AG04450 (cell line): ENCODE measurements at regions of chr12 and their contacts with region 1.

Region 1: GRCh38 chr12:51217968-51218606 is at the start of gene POU6F1:
- DNase-seq: peak; percentile 23
- H3K4me3 ChIP-seq: peak within 1 kb of the TSS; percentile 76
- H3K27ac ChIP-seq: peak within 1 kb of the TSS; percentile 75
- H3K27me3 ChIP-seq: no peaks in the 10 kb centered on the region
- CTCF ChIP-seq: peak; percentile 62
- polyA plus RNA-seq, gene POU6F1: 3.1 and 4.2 TPM in 2 replicates

Region 2: DNA sequence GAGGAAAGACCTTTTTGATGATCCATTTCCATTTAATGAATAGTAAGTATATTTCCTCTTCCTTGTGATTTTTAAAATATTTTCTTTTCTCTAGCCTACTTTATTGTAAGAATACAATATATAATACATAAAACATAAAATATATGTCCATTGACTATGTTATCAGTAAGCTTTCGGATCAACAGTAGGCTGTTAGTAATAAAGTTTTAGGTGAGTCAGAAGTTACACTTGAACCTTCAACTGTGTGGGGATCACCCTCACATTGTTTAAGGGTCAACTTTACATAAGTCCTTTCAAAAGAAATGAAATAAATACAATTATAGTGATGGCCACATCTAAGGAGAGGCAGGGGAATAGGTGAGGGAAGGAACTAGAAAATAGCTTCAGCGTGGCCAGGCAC is 40.2 kb before region 1 on chr12:
- CTCF ChIA-PET with region 1: interaction called, 10 read pairs
- POLR2A ChIA-PET with region 1: no interaction called
- DNase-seq: no peak
- H3K4me3 ChIP-seq: no peak overlapping the region
- H3K27ac ChIP-seq: no peak overlapping the region
- H3K27me3 ChIP-seq: no peaks in the 10 kb centered on the region
- CTCF ChIP-seq: no peak

Region 3: GRCh38 chr12:51229116-51229809 is 11.2 kb after region 1 on chr12:
- CTCF ChIA-PET with region 1: interaction called, 10 read pairs
- POLR2A ChIA-PET with region 1: no interaction called
- DNase-seq: no peak
- H3K4me3 ChIP-seq: no peak overlapping the region
- H3K27ac ChIP-seq: no peak overlapping the region
- H3K27me3 ChIP-seq: no peaks in the 10 kb centered on the region
- CTCF ChIP-seq: no peak

Region 4: DNA sequence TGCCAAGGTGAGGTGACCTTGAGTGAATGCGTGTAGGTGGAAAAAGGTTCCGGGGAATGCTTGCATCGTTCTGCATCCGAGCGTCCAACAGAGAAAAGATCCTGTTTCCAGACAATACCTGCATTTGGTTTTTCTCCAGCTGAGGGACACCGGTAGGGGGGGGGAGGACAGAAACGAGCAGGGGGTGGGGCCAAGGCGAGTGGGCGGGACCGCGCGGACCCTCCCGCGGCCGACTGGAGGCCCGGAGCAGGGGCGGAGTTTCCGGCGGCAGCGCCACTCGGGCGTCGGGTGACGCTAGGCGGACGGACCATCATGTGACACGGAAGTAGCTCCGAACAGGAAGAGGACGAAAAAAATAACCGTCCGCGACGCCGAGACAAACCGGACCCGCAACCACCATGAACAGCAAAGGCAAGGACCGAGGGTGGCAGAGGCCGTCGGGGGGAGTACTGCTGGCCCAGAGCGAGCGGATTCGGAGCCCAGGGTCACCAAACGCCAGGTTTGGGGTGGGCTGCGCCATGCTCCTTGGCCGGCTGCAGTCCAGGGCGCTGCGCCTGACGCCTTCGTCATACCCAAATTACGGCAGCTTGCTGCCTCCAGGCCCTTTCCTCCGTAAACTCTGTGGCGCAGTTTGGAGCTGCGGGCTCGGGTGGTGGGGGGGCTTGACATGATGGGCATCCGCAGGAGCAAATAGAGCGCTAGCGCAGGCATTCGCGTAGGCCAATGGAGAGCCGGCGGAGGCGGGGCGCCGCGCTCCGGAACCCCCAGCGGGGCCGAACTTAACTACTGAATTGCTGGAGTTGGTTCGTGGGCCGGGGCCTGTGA is 20.6 kb after region 1 on chr12 and contains the start of gene DAZAP2:
- CTCF ChIA-PET with region 1: interaction called, 6 read pairs
- POLR2A ChIA-PET with region 1: interaction called, 21 read pairs
- DNase-seq: peak; percentile 85
- H3K4me3 ChIP-seq: peak within 1 kb of the TSS; percentile 100
- H3K27ac ChIP-seq: peak within 1 kb of the TSS; percentile 100
- H3K27me3 ChIP-seq: no peaks in the 10 kb centered on the region
- CTCF ChIP-seq: peak; percentile 20
- polyA plus RNA-seq, gene DAZAP2: 285 and 333 TPM in 2 replicates